Activated B cell treated with CpG ODN at 0.5 μM for 24 hours (primary cell): ENCODE measurements at regions of chr12 and their contacts with region 1.

Region 1: DNA sequence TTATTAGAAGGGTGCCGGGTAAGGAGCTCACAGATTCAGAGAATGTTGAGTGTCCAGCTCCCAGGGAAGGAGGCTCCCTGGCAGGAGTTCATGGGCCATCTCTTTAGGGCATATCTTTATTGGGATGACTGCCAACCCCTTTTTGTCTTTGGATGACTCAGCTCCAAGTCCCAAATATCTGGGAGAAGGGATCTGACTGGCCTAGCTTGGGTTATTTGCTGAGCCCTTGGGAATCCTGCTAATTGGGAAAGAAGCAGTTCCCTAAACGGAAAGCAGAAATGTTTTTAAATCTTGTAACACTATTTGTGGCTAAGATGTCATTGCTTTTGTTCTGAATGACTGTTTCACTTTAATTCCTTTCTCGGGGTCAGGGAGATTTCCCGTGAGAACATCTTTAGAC is 12.6 kb downstream of the DDX55 start:
- DNase-seq: no peak
- ATAC-seq: no peak
- H3K4me3 Mint-ChIP-seq: no peak overlapping the region
- H3K27ac Mint-ChIP-seq: no peak overlapping the region
- H3K4me1 Mint-ChIP-seq: no peaks in the 10 kb centered on the region
- H3K27me3 Mint-ChIP-seq: no peaks in the 10 kb centered on the region
- CTCF ChIP-seq: no peak

Region 2: GRCh38 chr12:123043536-123044001 is 571.0 kb before region 1 on chr12:
- CTCF ChIA-PET with region 1: no interaction called
- POLR2A ChIA-PET with region 1: interaction called, 6 read pairs
- intact Hi-C with region 1: loop called (anchors 5 kb)
- DNase-seq: peak; percentile 51
- ATAC-seq: peak; percentile 97
- H3K4me3 Mint-ChIP-seq: no peak overlapping the region
- H3K27ac Mint-ChIP-seq: no peak overlapping the region
- H3K4me1 Mint-ChIP-seq: peaks cover 16% of the 10 kb centered on the region
- H3K27me3 Mint-ChIP-seq: no peaks in the 10 kb centered on the region
- CTCF ChIP-seq: no peak

Region 3: GRCh38 chr12:123271001-123271729 is 343.4 kb before region 1 on chr12:
- CTCF ChIA-PET with region 1: interaction called, 4 read pairs
- POLR2A ChIA-PET with region 1: no interaction called
- intact Hi-C with region 1: loop called (anchors 1 kb)
- DNase-seq: peak; percentile 76
- ATAC-seq: peak; percentile 81
- H3K4me3 Mint-ChIP-seq: no peak overlapping the region
- H3K27ac Mint-ChIP-seq: no peak overlapping the region
- H3K4me1 Mint-ChIP-seq: peaks cover 31% of the 10 kb centered on the region
- H3K27me3 Mint-ChIP-seq: no peaks in the 10 kb centered on the region
- CTCF ChIP-seq: no peak